ENCODE measurements at regions of chr19 and their contacts with region 1.

Region 1: GRCh38 chr19:14505488-14506432 is 9.8 kb upstream of the GIPC1 start:
- DNase-seq: peak; percentile 80
- ATAC-seq: peak; percentile 46
- H3K4me3 Mint-ChIP-seq: peak overlapping the region; percentile 34
- H3K27ac Mint-ChIP-seq: peak overlapping the region; percentile 94
- H3K4me1 Mint-ChIP-seq: peaks cover 40% of the 10 kb centered on the region
- H3K27me3 Mint-ChIP-seq: no peaks in the 10 kb centered on the region

Region 2: DNA sequence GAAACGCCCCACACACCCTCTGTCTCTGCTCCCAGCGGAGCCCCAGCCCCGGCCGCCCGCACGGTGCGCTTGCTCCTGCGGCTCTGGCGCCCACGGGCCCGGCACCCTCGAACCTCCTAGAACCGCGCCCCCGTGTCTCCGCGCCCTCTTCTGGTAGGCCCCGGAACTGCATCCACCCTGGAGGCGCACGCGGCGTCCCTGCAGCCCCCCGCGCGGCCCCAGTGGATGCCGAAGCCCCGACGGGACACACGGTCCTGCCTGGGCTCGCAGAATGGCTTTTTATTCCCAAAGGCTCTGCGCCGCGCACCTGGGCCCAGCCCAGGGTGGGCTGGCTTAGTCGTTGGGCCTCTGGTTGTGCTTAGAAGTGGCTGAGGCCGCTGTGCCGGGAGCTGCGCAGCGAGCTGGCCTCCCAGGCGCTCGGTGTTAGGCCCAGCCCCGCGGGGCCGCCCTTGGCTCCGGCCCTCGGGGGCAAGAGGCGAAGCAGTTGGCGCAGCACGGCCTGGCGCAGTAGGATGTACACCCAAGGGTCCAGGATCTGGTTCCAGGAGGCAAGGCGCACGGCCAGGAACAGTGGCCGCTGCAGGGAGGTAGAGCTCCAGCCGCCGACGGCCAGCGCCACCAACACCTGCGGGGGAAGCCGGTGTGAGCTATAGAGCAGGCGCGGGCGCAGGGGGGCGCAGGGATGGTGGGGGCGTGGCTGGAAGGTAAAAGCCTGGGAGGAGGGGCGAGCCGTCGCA is 33.4 kb before region 1 on chr19:
- CTCF ChIA-PET with region 1: interaction called, 11 read pairs
- POLR2A ChIA-PET with region 1: no interaction called
- DNase-seq: peak; percentile 88
- ATAC-seq: peak; percentile 73
- H3K4me3 Mint-ChIP-seq: no peak overlapping the region
- H3K27ac Mint-ChIP-seq: no peak overlapping the region
- H3K4me1 Mint-ChIP-seq: peaks cover 43% of the 10 kb centered on the region
- H3K27me3 Mint-ChIP-seq: peaks cover 16% of the 10 kb centered on the region

Region 3: GRCh38 chr19:14479975-14480699 is 25.6 kb before region 1 on chr19:
- CTCF ChIA-PET with region 1: interaction called, 25 read pairs
- POLR2A ChIA-PET with region 1: no interaction called
- DNase-seq: peak; percentile 74
- ATAC-seq: peak; percentile 70
- H3K4me3 Mint-ChIP-seq: no peak overlapping the region
- H3K27ac Mint-ChIP-seq: no peak overlapping the region
- H3K4me1 Mint-ChIP-seq: peaks cover 16% of the 10 kb centered on the region
- H3K27me3 Mint-ChIP-seq: no peaks in the 10 kb centered on the region

Region 4: GRCh38 chr19:14517840-14518505 is 12.2 kb after region 1 on chr19 and contains the start of gene DNAJB1:
- CTCF ChIA-PET with region 1: interaction called, 75 read pairs
- POLR2A ChIA-PET with region 1: interaction called, 203 read pairs
- DNase-seq: peak; percentile 74
- ATAC-seq: peak; percentile 73
- H3K4me3 Mint-ChIP-seq: peak within 1 kb of the TSS; percentile 94
- H3K27ac Mint-ChIP-seq: peak within 1 kb of the TSS; percentile 96
- H3K4me1 Mint-ChIP-seq: peaks cover 65% of the 10 kb centered on the region
- H3K27me3 Mint-ChIP-seq: no peaks in the 10 kb centered on the region
- total RNA-seq, gene DNAJB1: 110 to 112 TPM

Region 5: DNA sequence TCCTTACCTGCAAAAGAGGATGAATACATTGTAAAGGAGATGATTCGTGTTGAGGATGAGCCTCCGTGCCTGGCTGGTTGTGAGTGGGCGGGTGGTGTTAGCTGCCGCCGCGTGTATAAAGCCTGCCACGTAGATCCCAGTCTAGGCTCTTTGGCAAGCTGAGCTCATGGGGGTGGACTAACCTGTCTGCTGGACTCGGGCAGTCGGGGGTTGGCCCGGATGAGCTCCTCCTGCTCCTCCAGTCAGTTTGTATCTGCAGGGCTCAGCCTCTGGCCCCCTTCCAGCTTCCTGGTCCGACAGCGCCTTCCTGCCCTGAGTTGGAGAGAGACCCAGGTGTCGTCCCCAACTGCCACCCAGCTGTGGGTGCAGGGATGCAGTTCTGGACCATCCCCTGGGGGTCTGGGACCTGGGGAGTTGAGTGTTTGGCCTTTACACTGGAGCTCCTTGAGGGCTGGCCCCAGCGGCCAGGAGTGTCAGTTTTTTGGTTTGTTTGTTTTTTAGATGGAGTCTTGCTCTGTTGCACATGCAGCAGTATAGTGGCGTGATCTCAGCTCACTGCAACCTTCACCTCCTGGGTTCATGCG is 44.5 kb after region 1 on chr19:
- CTCF ChIA-PET with region 1: interaction called, 33 read pairs
- POLR2A ChIA-PET with region 1: no interaction called
- DNase-seq: no peak
- ATAC-seq: no peak
- H3K4me3 Mint-ChIP-seq: no peak overlapping the region
- H3K27ac Mint-ChIP-seq: peak overlapping the region; percentile 64
- H3K4me1 Mint-ChIP-seq: peaks cover 34% of the 10 kb centered on the region
- H3K27me3 Mint-ChIP-seq: no peaks in the 10 kb centered on the region

Region 6: DNA sequence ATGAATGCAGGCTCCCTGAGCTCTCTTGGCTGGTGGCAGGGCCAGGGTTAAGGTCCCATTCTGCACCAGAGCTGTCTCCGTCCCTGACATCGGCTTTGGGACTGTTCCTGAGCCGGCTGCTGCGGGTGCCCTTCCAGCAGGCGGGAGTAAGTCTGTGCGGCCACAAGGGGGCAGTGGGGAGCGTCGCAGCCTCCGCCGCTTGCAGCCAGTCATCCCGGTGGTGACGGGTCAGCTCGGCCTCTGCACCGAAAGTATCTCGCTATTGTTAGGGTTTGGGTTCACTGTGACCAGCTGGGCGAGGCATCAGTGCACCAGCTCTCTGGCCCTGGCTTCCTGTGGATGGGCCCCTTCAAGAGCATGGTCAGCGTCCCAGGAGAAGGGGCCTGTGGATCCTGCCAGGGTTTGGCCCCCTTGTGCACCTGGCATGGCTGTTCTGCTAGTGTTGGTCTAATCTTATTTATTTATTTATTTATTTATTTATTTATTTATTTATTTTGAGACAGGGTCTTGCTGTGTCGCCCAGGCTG is 51.0 kb after region 1 on chr19:
- CTCF ChIA-PET with region 1: interaction called, 33 read pairs
- POLR2A ChIA-PET with region 1: no interaction called
- DNase-seq: peak; percentile 77
- ATAC-seq: peak; percentile 79
- H3K4me3 Mint-ChIP-seq: no peak overlapping the region
- H3K27ac Mint-ChIP-seq: peak overlapping the region; percentile 69
- H3K4me1 Mint-ChIP-seq: peaks cover 39% of the 10 kb centered on the region
- H3K27me3 Mint-ChIP-seq: no peaks in the 10 kb centered on the region

Region 7: GRCh38 chr19:14616407-14616806 is 110.6 kb after region 1 on chr19:
- CTCF ChIA-PET with region 1: no interaction called
- POLR2A ChIA-PET with region 1: no interaction called
- DNase-seq: no peak
- ATAC-seq: no peak
- H3K4me3 Mint-ChIP-seq: no peak overlapping the region
- H3K27ac Mint-ChIP-seq: no peak overlapping the region
- H3K4me1 Mint-ChIP-seq: no peaks in the 10 kb centered on the region
- H3K27me3 Mint-ChIP-seq: no peaks in the 10 kb centered on the region